Activated B cell treated with CpG ODN at 0.5 μM for 24 hours (primary cell): ENCODE measurements at regions of chr11 and their contacts with region 1.

Region 1: GRCh38 chr11:33362051-33362910 is 105.1 kb downstream of the HIPK3 start:
- DNase-seq: no peak
- ATAC-seq: peak; percentile 65
- H3K4me3 Mint-ChIP-seq: no peak overlapping the region
- H3K27ac Mint-ChIP-seq: no peak overlapping the region
- H3K4me1 Mint-ChIP-seq: no peaks in the 10 kb centered on the region
- H3K27me3 Mint-ChIP-seq: no peaks in the 10 kb centered on the region
- CTCF ChIP-seq: no peak

Region 2: DNA sequence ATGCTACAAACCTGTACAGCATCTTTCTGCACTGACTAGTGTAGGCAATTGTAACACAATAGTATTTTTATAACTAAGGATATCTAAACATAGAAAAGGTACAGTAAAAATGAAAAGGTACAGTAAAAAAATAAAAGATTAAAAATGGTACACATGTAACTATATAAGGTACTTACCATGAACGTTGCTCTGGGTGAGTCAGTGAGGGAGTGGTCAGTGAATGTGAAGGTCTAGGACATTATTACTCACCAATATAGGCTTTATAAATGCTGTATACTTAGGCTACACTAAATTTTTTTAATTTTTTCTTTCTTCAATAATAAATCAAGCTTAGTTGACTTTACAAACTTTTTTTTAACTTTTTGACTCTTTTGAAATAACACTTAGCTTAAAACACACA is 718.8 kb before region 1 on chr11:
- CTCF ChIA-PET with region 1: no interaction called
- POLR2A ChIA-PET with region 1: no interaction called
- intact Hi-C with region 1: no loop called
- DNase-seq: no peak
- ATAC-seq: no peak
- H3K4me3 Mint-ChIP-seq: no peak overlapping the region
- H3K27ac Mint-ChIP-seq: no peak overlapping the region
- H3K4me1 Mint-ChIP-seq: no peaks in the 10 kb centered on the region
- H3K27me3 Mint-ChIP-seq: peaks cover 6% of the 10 kb centered on the region
- CTCF ChIP-seq: no peak

Region 3: GRCh38 chr11:33394431-33395109 is 32.3 kb after region 1 on chr11:
- CTCF ChIA-PET with region 1: no interaction called
- POLR2A ChIA-PET with region 1: no interaction called
- intact Hi-C with region 1: no loop called
- DNase-seq: no peak
- ATAC-seq: no peak
- H3K4me3 Mint-ChIP-seq: no peak overlapping the region
- H3K27ac Mint-ChIP-seq: no peak overlapping the region
- H3K4me1 Mint-ChIP-seq: peaks cover 5% of the 10 kb centered on the region
- H3K27me3 Mint-ChIP-seq: peaks cover 6% of the 10 kb centered on the region
- CTCF ChIP-seq: no peak

Region 4: GRCh38 chr11:33525789-33526188 is 163.5 kb after region 1 on chr11:
- CTCF ChIA-PET with region 1: interaction called, 3 read pairs
- POLR2A ChIA-PET with region 1: no interaction called
- intact Hi-C with region 1: loop called (anchors 5 kb)
- DNase-seq: no peak
- ATAC-seq: no peak
- H3K4me3 Mint-ChIP-seq: no peak overlapping the region
- H3K27ac Mint-ChIP-seq: no peak overlapping the region
- H3K4me1 Mint-ChIP-seq: no peaks in the 10 kb centered on the region
- H3K27me3 Mint-ChIP-seq: peaks cover 17% of the 10 kb centered on the region
- CTCF ChIP-seq: no peak

Region 5: GRCh38 chr11:33687733-33688479 is 325.6 kb after region 1 on chr11:
- CTCF ChIA-PET with region 1: no interaction called
- POLR2A ChIA-PET with region 1: no interaction called
- intact Hi-C with region 1: loop called (anchors 1 kb)
- DNase-seq: no peak
- ATAC-seq: no peak
- H3K4me3 Mint-ChIP-seq: no peak overlapping the region
- H3K27ac Mint-ChIP-seq: no peak overlapping the region
- H3K4me1 Mint-ChIP-seq: no peaks in the 10 kb centered on the region
- H3K27me3 Mint-ChIP-seq: peaks cover 10% of the 10 kb centered on the region
- CTCF ChIP-seq: no peak

Region 6: DNA sequence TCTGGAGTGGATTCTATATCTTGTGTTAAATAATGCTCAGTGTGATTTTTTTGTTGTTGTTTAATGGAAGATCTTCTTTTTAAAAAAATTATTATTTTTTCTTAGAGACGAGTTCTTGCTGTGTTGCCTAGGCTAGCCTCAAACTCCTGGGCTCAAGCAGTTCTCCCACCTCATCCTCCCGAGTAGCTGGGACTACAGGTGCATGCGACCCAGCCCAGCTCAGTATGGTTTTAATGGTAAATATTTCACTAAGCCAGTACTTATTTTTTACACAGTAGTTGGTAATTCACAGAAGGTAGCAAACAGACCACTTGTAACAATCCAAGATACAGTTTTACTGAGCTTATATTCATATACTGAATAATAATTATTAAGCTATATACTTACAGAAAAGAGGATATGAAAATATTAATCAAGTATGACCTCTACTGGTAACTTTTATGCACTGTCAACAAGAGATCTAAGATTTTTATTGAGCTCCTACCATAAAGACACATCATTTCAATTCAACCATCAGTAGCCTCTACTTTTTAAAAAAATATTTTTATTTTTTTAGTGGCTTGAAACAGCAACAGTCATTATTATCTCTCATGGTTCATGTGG is 380.1 kb after region 1 on chr11:
- CTCF ChIA-PET with region 1: interaction called, 73 read pairs
- POLR2A ChIA-PET with region 1: interaction called, 4 read pairs
- intact Hi-C with region 1: loop called (anchors 1 kb)
- DNase-seq: no peak
- ATAC-seq: peak; percentile 65
- H3K4me3 Mint-ChIP-seq: no peak overlapping the region
- H3K27ac Mint-ChIP-seq: no peak overlapping the region
- H3K4me1 Mint-ChIP-seq: no peaks in the 10 kb centered on the region
- H3K27me3 Mint-ChIP-seq: no peaks in the 10 kb centered on the region
- CTCF ChIP-seq: no peak

Region 7: GRCh38 chr11:33857933-33858371 is 495.7 kb after region 1 on chr11:
- CTCF ChIA-PET with region 1: no interaction called
- POLR2A ChIA-PET with region 1: no interaction called
- intact Hi-C with region 1: no loop called
- DNase-seq: peak; percentile 65
- ATAC-seq: peak; percentile 98
- H3K4me3 Mint-ChIP-seq: no peak overlapping the region
- H3K27ac Mint-ChIP-seq: no peak overlapping the region
- H3K4me1 Mint-ChIP-seq: peaks cover 8% of the 10 kb centered on the region
- H3K27me3 Mint-ChIP-seq: no peaks in the 10 kb centered on the region
- CTCF ChIP-seq: peak; percentile 39